ENCODE measurements at regions of chr15 and their contacts with region 1.

Region 1: DNA sequence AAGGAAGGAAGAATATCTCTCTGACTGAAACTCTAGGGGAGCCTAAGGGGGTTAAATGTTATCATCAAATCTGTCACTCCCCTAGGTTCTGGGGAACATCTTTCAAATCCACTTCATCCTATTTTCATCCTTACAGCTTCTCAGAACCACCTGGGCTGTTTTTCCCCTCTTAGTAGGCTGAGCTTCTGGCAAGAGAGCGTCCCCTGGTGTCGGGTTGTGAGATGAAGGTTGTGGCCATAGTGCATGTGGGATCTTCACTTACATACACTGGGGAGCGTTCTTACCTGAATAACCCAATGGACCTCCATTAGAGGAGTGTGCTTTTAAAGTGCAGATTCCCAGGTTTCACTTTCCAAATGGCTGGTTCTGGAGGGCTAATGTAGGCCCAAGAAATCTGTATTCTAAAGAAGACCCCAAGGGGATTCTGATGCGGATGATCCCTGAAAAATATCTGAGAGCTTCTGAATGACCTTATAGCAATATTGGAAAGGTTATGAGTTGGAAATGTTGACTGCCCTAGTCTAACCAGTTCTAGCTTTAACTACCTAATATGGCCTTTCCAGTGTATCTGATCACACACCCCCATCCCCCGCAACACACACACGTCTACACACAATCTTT is 663.7 kb downstream of the AGBL1 start:
- DNase-seq: peak in 4 of 5 donors; percentile 32 to 48 (median 39)
- H3K4me3 ChIP-seq: no peak overlapping the region
- H3K4me3 Mint-ChIP-seq: no peak overlapping the region
- H3K27ac ChIP-seq: no peak overlapping the region
- H3K27ac Mint-ChIP-seq: no peak overlapping the region
- H3K4me1 ChIP-seq: no peaks in the 10 kb centered on the region
- H3K4me1 Mint-ChIP-seq: peaks cover 0 to 3% (median 0%) of the 10 kb centered on the region in 4 donors
- H3K27me3 ChIP-seq: no peaks in the 10 kb centered on the region
- H3K27me3 Mint-ChIP-seq: no peaks in the 10 kb centered on the region

Region 2: GRCh38 chr15:85858586-85859375 is 884.6 kb before region 1 on chr15:
- CTCF ChIA-PET with region 1: interaction called, 9 read pairs
- POLR2A ChIA-PET with region 1: no interaction called
- intact Hi-C with region 1: loop called (anchors 1 kb)
- DNase-seq: peak; percentile 66 to 71 (median 69)
- H3K4me3 ChIP-seq: peak overlapping the region in 1 of 2 donors; percentile 19
- H3K4me3 Mint-ChIP-seq: peak overlapping the region in 7 of 8 donors; percentile 1 to 80 (median 60)
- H3K27ac ChIP-seq: no peak overlapping the region
- H3K27ac Mint-ChIP-seq: peak overlapping the region in 5 of 7 donors; percentile 15 to 82 (median 47)
- H3K4me1 ChIP-seq: no peaks in the 10 kb centered on the region
- H3K4me1 Mint-ChIP-seq: peaks cover 5 to 11% (median 8%) of the 10 kb centered on the region in 4 donors
- H3K27me3 ChIP-seq: peaks cover 5% of the 10 kb centered on the region
- H3K27me3 Mint-ChIP-seq: peaks cover 16 to 18% of the 10 kb centered on the region in 2 donors

Region 3: GRCh38 chr15:86231864-86232721 is 511.3 kb before region 1 on chr15:
- CTCF ChIA-PET with region 1: interaction called, 61 read pairs
- POLR2A ChIA-PET with region 1: no interaction called
- intact Hi-C with region 1: no loop called
- DNase-seq: peak; percentile 18 to 39 (median 28)
- H3K4me3 ChIP-seq: no peak overlapping the region
- H3K4me3 Mint-ChIP-seq: peak overlapping the region in 1 of 8 donors; percentile 13
- H3K27ac ChIP-seq: no peak overlapping the region
- H3K27ac Mint-ChIP-seq: no peak overlapping the region
- H3K4me1 ChIP-seq: no peaks in the 10 kb centered on the region
- H3K4me1 Mint-ChIP-seq: peaks cover 0 to 8% (median 3%) of the 10 kb centered on the region in 4 donors
- H3K27me3 ChIP-seq: peaks cover 8% of the 10 kb centered on the region
- H3K27me3 Mint-ChIP-seq: peaks cover 15% of the 10 kb centered on the region in 2 donors

Region 4: GRCh38 chr15:86355801-86356200 is 387.6 kb before region 1 on chr15:
- CTCF ChIA-PET with region 1: no interaction called
- POLR2A ChIA-PET with region 1: no interaction called
- intact Hi-C with region 1: loop called (anchors 5 kb)
- DNase-seq: no peak
- H3K4me3 ChIP-seq: no peak overlapping the region
- H3K4me3 Mint-ChIP-seq: no peak overlapping the region
- H3K27ac ChIP-seq: no peak overlapping the region
- H3K27ac Mint-ChIP-seq: no peak overlapping the region
- H3K4me1 ChIP-seq: no peaks in the 10 kb centered on the region
- H3K4me1 Mint-ChIP-seq: peaks cover 0 to 2% (median 0%) of the 10 kb centered on the region in 4 donors
- H3K27me3 ChIP-seq: no peaks in the 10 kb centered on the region
- H3K27me3 Mint-ChIP-seq: no peaks in the 10 kb centered on the region

Region 5: GRCh38 chr15:86624261-86625036 is 118.9 kb before region 1 on chr15:
- CTCF ChIA-PET with region 1: interaction called, 64 read pairs
- POLR2A ChIA-PET with region 1: interaction called, 7 read pairs
- intact Hi-C with region 1: no loop called
- DNase-seq: peak; percentile 30 to 47 (median 38)
- H3K4me3 ChIP-seq: no peak overlapping the region
- H3K4me3 Mint-ChIP-seq: no peak overlapping the region
- H3K27ac ChIP-seq: no peak overlapping the region
- H3K27ac Mint-ChIP-seq: peak overlapping the region in 2 of 7 donors; percentile 4 to 43
- H3K4me1 ChIP-seq: peaks cover 13% of the 10 kb centered on the region
- H3K4me1 Mint-ChIP-seq: peaks cover 16 to 34% (median 28%) of the 10 kb centered on the region in 4 donors
- H3K27me3 ChIP-seq: no peaks in the 10 kb centered on the region
- H3K27me3 Mint-ChIP-seq: no peaks in the 10 kb centered on the region

Region 6: DNA sequence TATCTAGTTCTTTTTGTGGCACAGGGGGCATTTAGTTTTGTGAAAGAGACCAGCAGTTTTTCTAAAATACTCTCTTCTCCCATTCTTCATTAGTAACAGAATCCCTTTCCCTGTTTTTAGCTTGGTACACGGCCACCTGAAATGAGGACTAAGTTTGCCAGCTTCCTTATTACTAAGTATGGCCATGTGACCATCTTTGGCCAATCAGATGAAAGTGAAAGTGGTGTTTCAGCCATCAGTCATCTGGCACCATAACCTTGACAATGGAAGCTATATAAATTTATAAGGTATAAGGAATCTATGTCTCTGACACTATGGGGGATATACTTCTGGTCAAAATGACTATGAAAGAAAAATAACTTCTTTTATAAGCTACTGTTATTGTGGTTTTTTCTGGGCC is 93.3 kb before region 1 on chr15:
- CTCF ChIA-PET with region 1: interaction called, 29 read pairs
- POLR2A ChIA-PET with region 1: interaction called, 3 read pairs
- intact Hi-C with region 1: no loop called
- DNase-seq: no peak
- H3K4me3 ChIP-seq: no peak overlapping the region
- H3K4me3 Mint-ChIP-seq: no peak overlapping the region
- H3K27ac ChIP-seq: no peak overlapping the region
- H3K27ac Mint-ChIP-seq: no peak overlapping the region
- H3K4me1 ChIP-seq: peaks cover 51% of the 10 kb centered on the region
- H3K4me1 Mint-ChIP-seq: peaks cover 40 to 54% (median 47%) of the 10 kb centered on the region in 4 donors
- H3K27me3 ChIP-seq: no peaks in the 10 kb centered on the region
- H3K27me3 Mint-ChIP-seq: no peaks in the 10 kb centered on the region

Region 7: DNA sequence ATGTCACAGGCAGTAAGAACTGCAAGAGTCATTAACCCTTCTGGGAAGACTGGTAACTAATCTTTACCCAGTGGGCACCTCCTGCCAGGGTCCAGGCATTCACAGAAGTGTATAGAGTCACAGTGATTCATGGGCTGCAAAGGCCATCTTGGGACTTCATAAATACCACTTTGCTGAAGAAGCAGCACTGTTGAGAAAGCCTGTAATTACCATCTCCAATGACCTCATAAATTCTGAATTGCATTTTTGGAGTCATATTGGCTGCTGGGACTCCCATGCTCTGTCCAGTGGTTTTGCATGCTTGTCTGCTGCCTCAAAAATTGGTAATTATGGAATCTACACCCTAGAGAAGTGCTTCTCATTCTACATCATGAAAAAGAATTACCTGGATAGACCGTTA is 676.0 kb after region 1 on chr15:
- CTCF ChIA-PET with region 1: no interaction called
- POLR2A ChIA-PET with region 1: no interaction called
- intact Hi-C with region 1: no loop called
- DNase-seq: no peak
- H3K4me3 ChIP-seq: no peak overlapping the region
- H3K4me3 Mint-ChIP-seq: no peak overlapping the region
- H3K27ac ChIP-seq: no peak overlapping the region
- H3K27ac Mint-ChIP-seq: no peak overlapping the region
- H3K4me1 ChIP-seq: no peaks in the 10 kb centered on the region
- H3K4me1 Mint-ChIP-seq: no peaks in the 10 kb centered on the region
- H3K27me3 ChIP-seq: no peaks in the 10 kb centered on the region
- H3K27me3 Mint-ChIP-seq: peaks cover 2 to 3% of the 10 kb centered on the region in 2 donors